ENCODE measurements at regions of chr12 and their contacts with region 1.

Region 1: GRCh38 chr12:80099259-80099658 is at the start of gene OTOGL:
- DNase-seq: no peak
- ATAC-seq: no peak
- H3K4me3 ChIP-seq: no peak within 1 kb of the TSS
- H3K27ac ChIP-seq: no peak within 1 kb of the TSS
- H3K4me1 ChIP-seq: no peaks in the 10 kb centered on the region
- H3K27me3 ChIP-seq: no peaks in the 10 kb centered on the region
- CTCF ChIP-seq: no peak
- total RNA-seq, gene OTOGL: 0.26 to 0.30 TPM in 2 of 4 donors, not detected in the others

Region 2: GRCh38 chr12:78101946-78102635 is 1997.2 kb before region 1 on chr12:
- intact Hi-C with region 1: loop called in 1 of 2 experiments (anchors 10 kb)
- DNase-seq: no peak
- ATAC-seq: no peak
- H3K4me3 ChIP-seq: no peak overlapping the region
- H3K27ac ChIP-seq: no peak overlapping the region
- H3K4me1 ChIP-seq: no peaks in the 10 kb centered on the region
- H3K27me3 ChIP-seq: no peaks in the 10 kb centered on the region
- CTCF ChIP-seq: no peak

Region 3: GRCh38 chr12:80018119-80018518 is 81.1 kb before region 1 on chr12:
- intact Hi-C with region 1: no loop called
- DNase-seq: no peak
- ATAC-seq: no peak
- H3K4me3 ChIP-seq: no peak overlapping the region
- H3K27ac ChIP-seq: no peak overlapping the region
- H3K4me1 ChIP-seq: no peaks in the 10 kb centered on the region
- H3K27me3 ChIP-seq: no peaks in the 10 kb centered on the region
- CTCF ChIP-seq: no peak

Region 4: DNA sequence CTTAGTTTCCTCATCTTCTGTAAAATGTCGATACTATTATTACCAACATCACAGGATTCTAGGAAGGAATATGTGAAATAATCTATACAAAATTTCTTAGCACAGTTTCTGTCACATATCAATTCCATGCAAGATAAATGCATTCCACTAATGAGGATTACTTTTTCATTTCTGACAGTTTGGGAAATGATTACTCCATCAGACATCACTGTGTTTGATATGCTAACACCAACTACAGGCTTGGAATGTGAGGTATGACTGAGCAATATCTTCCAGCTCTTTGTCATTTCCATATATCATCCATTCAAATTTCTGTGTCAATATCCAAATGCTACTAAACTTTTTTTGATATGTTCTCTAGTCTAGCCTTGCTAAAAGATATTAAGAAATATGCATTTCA is 233.6 kb after region 1 on chr12:
- intact Hi-C with region 1: no loop called
- DNase-seq: no peak
- ATAC-seq: no peak
- H3K4me3 ChIP-seq: no peak overlapping the region
- H3K27ac ChIP-seq: no peak overlapping the region
- H3K4me1 ChIP-seq: no peaks in the 10 kb centered on the region
- H3K27me3 ChIP-seq: no peaks in the 10 kb centered on the region
- CTCF ChIP-seq: no peak

Measured in psoas muscle (tissue), 8 donors.